Right ventricle myocardium superior (tissue), 1 donor: ENCODE measurements at regions of chr11 and their contacts with region 1.

Region 1: DNA sequence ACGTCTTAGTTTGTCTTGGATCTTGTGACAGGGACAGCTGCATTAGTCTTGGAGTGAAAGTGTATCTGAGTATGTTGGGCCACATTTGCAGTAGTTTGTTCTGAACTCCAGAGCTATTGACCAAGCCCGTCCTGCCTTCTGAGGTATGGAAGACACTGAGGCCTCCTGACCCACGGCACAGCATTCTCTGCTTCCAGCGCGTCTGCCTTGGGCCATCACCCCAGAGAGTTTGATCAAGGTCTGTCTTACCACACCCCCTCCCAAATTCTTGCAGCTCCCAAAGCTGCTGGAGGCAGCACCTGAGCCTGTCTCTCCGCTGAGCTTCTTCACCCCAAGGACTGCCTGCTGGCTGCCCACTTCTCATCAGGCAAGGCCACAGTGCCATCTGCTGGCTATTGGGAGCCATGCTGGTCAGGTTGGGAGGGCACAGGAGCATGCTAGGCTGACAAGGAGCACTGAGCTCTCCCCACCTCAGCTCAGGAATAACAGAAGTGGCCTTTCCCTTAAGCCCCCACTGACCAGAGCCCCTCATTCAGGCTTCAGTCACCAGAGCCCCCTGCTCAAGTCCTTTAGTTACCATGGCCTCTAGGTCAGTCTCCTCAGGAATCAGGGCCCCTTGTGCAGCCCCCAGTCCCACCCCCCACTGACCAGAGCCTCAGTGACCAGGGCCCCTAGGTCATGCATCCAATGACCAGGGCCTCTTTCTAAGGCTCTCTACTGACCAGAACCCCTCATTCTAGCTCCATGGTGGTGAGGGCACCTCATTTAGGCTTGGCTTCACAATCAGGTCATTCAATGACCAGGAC is 27.2 kb upstream of the SMPD1 start:
- DNase-seq: peak; percentile 87
- ATAC-seq: peak; percentile 95

Region 2: DNA sequence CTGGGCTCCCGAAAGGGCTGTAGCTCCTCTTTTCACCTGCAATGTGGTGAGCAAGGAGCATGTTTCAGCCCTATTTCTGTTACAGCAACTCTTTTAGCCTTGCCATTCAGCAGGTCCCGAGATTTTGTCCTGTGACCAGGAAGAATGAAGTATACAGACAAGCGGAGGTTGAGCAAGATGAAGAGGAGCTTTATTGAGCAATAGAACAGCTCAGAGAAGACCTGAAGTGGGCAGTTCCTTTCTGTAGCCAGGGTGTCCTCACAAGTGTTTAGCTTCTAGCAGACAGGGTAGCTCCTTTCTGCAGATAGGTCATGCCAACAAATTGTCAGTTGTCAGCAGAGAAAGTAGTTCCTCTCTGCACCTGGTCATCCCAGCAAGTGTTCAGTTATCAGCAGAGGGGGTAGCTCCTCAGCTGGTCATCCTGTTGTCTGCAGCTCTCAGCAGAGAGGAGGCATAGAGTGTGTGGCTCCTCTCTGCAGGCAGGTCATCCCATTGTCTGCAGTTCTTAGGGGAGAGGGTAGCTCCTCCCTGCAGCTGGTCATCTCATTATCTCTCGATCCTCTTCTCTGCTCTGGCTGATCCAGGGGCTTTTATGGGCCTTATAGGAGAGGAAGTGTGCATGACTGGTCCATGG is 350.9 kb before region 1 on chr11:
- intact Hi-C with region 1: no loop called
- DNase-seq: no peak
- ATAC-seq: no peak

Region 3: DNA sequence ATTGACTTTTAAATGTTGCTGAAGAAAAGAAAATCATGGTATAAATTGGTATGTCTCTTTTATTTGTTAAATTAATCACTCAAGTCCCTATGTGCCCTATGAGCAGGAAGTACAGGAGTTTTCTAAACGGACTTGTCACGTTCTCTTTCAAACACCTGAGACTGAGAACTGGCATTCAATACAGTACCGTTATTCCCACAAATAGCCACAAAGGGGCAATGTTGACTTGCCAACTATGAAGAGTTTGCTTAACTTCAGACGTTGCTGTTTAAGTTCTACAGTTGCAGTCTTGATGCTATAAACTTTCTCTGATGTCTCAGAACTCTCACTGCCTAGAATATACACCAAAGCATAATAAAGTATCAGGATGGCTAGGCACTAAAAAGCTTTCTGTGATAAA is 340.1 kb before region 1 on chr11:
- intact Hi-C with region 1: loop called (anchors 5 kb)
- DNase-seq: no peak
- ATAC-seq: peak; percentile 80

Region 4: GRCh38 chr11:6251120-6251733 is 111.8 kb before region 1 on chr11:
- intact Hi-C with region 1: loop called (anchors 10 kb)
- DNase-seq: peak; percentile 70
- ATAC-seq: peak; percentile 93